CD8-positive, alpha-beta memory T cell (primary cell): ENCODE measurements at regions of chr3 and their contacts with region 1.

Region 1: DNA sequence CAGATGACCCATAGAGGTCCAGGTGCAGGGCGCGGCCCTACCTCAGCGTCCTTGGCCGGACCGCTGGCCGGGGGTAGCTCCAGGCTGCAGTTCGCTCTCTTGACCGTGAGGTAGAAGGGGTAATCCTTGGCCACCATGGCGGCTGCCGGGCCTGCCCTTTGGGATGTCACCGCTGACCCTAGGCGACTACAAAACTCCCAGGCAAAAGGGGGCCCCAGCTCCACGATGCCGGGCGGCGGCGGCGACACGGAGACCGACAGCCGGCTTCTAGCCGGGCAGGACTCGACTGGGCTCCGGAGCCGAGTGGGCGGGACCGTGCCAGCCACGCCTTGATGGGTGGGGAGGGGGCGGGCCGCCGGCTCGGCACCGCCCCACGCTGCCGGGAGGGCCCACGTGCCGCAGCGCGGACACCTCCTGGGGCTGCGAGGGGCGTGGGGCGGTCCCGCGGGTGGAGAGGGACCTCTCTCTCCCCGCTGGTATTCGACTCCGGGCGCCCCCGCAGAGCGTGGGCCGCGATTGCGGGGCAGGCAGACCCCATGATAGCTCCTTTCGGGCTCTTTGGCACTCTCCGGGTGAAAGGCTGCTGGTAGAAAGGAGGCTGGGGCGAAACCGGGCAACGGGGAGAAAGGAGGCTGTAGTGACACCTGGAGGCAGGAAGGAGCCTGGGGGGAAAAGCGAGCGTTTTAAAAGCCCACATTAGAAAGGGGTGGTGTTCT is at the start of gene ARHGEF3:
- DNase-seq: peak; percentile 84 to 91 (median 87)
- H3K4me3 ChIP-seq: peak within 1 kb of the TSS; percentile 75
- H3K4me3 Mint-ChIP-seq: peak within 1 kb of the TSS; percentile 89 to 100 (median 94)
- H3K27ac ChIP-seq: peak within 1 kb of the TSS; percentile 73
- H3K27ac Mint-ChIP-seq: peak within 1 kb of the TSS; percentile 78 to 95 (median 92)
- H3K4me1 ChIP-seq: peaks cover 37% of the 10 kb centered on the region
- H3K4me1 Mint-ChIP-seq: peaks cover 35 to 50% (median 39%) of the 10 kb centered on the region in 3 donors
- H3K27me3 ChIP-seq: no peaks in the 10 kb centered on the region
- H3K27me3 Mint-ChIP-seq: no peaks in the 10 kb centered on the region
- total RNA-seq, gene ARHGEF3: 55.1 to 56.6 TPM

Region 2: GRCh38 chr3:56702490-56703315 is 99.1 kb before region 1 on chr3:
- CTCF ChIA-PET with region 1: interaction called, 144 read pairs
- POLR2A ChIA-PET with region 1: interaction called, 36 read pairs
- DNase-seq: peak in 4 of 5 donors; percentile 34 to 68 (median 62)
- H3K4me3 ChIP-seq: no peak overlapping the region
- H3K4me3 Mint-ChIP-seq: no peak overlapping the region
- H3K27ac ChIP-seq: no peak overlapping the region
- H3K27ac Mint-ChIP-seq: peak overlapping the region in 1 of 8 donors; percentile 7
- H3K4me1 ChIP-seq: peaks cover 15% of the 10 kb centered on the region
- H3K4me1 Mint-ChIP-seq: peaks cover 23% of the 10 kb centered on the region in 3 donors
- H3K27me3 ChIP-seq: no peaks in the 10 kb centered on the region
- H3K27me3 Mint-ChIP-seq: peaks cover 0 to 3% of the 10 kb centered on the region in 2 donors

Region 3: GRCh38 chr3:56737006-56737405 is 64.8 kb before region 1 on chr3:
- CTCF ChIA-PET with region 1: interaction called, 14 read pairs
- POLR2A ChIA-PET with region 1: interaction called, 9 read pairs
- DNase-seq: no peak
- H3K4me3 ChIP-seq: no peak overlapping the region
- H3K4me3 Mint-ChIP-seq: peak overlapping the region in 1 of 7 donors; percentile 36
- H3K27ac ChIP-seq: no peak overlapping the region
- H3K27ac Mint-ChIP-seq: peak overlapping the region in 5 of 8 donors; percentile 3 to 66 (median 19)
- H3K4me1 ChIP-seq: peaks cover 33% of the 10 kb centered on the region
- H3K4me1 Mint-ChIP-seq: peaks cover 34 to 73% (median 43%) of the 10 kb centered on the region in 3 donors
- H3K27me3 ChIP-seq: no peaks in the 10 kb centered on the region
- H3K27me3 Mint-ChIP-seq: peaks cover 0 to 2% of the 10 kb centered on the region in 2 donors

Region 4: GRCh38 chr3:56758539-56758981 is 43.3 kb before region 1 on chr3:
- CTCF ChIA-PET with region 1: interaction called, 127 read pairs
- POLR2A ChIA-PET with region 1: interaction called, 50 read pairs
- DNase-seq: peak in 2 of 5 donors; percentile 7 to 62
- H3K4me3 ChIP-seq: no peak overlapping the region
- H3K4me3 Mint-ChIP-seq: peak overlapping the region; percentile 32 to 81 (median 67)
- H3K27ac ChIP-seq: no peak overlapping the region
- H3K27ac Mint-ChIP-seq: peak overlapping the region; percentile 71 to 96 (median 84)
- H3K4me1 ChIP-seq: peaks cover 86% of the 10 kb centered on the region
- H3K4me1 Mint-ChIP-seq: peaks cover 87 to 95% (median 94%) of the 10 kb centered on the region in 3 donors
- H3K27me3 ChIP-seq: no peaks in the 10 kb centered on the region
- H3K27me3 Mint-ChIP-seq: no peaks in the 10 kb centered on the region

Region 5: GRCh38 chr3:56783644-56784447 is 18.0 kb before region 1 on chr3:
- CTCF ChIA-PET with region 1: interaction called, 208 read pairs
- POLR2A ChIA-PET with region 1: interaction called, 108 read pairs
- DNase-seq: peak; percentile 40 to 88 (median 82)
- H3K4me3 ChIP-seq: peak overlapping the region; percentile 51
- H3K4me3 Mint-ChIP-seq: peak overlapping the region; percentile 43 to 87 (median 82)
- H3K27ac ChIP-seq: peak overlapping the region; percentile 55
- H3K27ac Mint-ChIP-seq: peak overlapping the region; percentile 87 to 99 (median 95)
- H3K4me1 ChIP-seq: peaks cover 99% of the 10 kb centered on the region
- H3K4me1 Mint-ChIP-seq: peaks cover 96 to 98% (median 98%) of the 10 kb centered on the region in 3 donors
- H3K27me3 ChIP-seq: no peaks in the 10 kb centered on the region
- H3K27me3 Mint-ChIP-seq: no peaks in the 10 kb centered on the region

Region 6: DNA sequence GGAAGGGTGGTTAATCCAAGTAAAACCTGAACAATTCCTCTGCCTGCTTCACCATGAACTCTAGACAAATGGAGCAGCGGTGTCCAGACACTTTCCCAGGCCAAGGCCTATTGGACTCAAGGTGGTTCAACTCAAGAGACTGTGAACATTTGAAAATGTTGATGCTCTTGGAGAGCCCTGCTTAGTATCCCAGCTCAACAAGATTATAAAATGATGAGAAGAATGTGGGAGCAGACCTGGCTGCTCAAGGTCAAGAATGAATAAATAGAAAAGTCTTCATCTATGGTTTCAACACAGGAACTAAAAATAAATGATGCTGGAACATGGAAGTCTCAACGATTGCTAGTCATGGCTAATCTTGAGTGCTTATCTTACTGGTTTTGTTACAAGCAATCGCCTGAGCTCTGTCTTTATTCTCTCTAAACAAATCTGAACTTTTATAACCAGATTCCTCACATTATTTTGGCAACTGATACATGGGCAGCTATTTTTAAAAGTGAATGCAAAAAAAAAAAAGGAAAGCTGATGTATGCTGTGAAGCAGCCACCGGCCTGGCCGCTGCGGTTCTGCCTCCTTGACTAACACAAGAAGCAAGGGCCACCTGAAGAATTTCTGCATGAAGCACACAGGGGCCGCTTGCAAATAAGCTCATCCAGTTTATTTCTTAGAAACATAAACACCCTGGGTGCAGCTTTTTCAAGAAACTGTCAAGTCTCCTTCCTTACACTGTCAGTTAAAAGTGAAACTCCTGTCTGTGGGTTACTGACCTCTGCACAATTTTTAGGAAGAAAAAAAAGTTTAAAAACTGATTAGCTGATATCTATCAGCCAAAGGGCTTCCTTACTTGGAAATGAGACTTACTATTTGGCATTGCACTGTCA is 120.0 kb after region 1 on chr3:
- CTCF ChIA-PET with region 1: interaction called, 43 read pairs
- POLR2A ChIA-PET with region 1: interaction called, 25 read pairs
- DNase-seq: no peak
- H3K4me3 ChIP-seq: peak overlapping the region; percentile 7
- H3K4me3 Mint-ChIP-seq: peak overlapping the region; percentile 66 to 92 (median 82)
- H3K27ac ChIP-seq: no peak overlapping the region
- H3K27ac Mint-ChIP-seq: peak overlapping the region; percentile 91 to 99 (median 96)
- H3K4me1 ChIP-seq: peaks cover 88% of the 10 kb centered on the region
- H3K4me1 Mint-ChIP-seq: peaks cover 77 to 94% (median 90%) of the 10 kb centered on the region in 3 donors
- H3K27me3 ChIP-seq: no peaks in the 10 kb centered on the region
- H3K27me3 Mint-ChIP-seq: no peaks in the 10 kb centered on the region